T-cell (primary cell): ENCODE measurements at regions of chr19 and their contacts with region 1.

Region 1: GRCh38 chr19:40542202-40542859 is 34.3 kb upstream of the SHKBP1 start:
- DNase-seq: no peak
- ATAC-seq: no peak
- H3K4me3 ChIP-seq: no peak overlapping the region
- H3K4me3 Mint-ChIP-seq: no peak overlapping the region
- H3K27ac ChIP-seq: no peak overlapping the region
- H3K27ac Mint-ChIP-seq: no peak overlapping the region
- H3K4me1 ChIP-seq: no peaks in the 10 kb centered on the region
- H3K4me1 Mint-ChIP-seq: no peaks in the 10 kb centered on the region
- H3K27me3 ChIP-seq: peaks cover 4 to 8% of the 10 kb centered on the region in 2 experiments
- H3K27me3 Mint-ChIP-seq: peaks cover 7 to 10% of the 10 kb centered on the region in 2 donors

Region 2: DNA sequence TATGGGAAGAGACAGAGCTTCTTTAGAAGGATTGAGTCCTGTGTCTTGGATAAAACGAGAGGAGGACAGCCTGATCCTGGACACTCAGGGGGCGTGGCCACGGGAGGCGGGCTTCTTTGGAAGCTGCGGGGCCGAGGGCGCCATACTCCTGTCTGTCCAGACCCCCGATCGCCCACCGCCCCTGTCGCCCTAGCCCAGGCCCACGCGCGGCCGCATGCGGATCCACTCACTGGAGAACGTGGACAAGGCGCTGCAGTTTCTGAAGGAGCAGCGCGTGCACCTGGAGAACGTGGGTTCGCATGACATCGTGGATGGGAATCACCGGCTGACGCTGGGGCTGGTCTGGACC is 52.5 kb before region 1 on chr19:
- CTCF ChIA-PET with region 1: interaction called, 5 to 10 read pairs
- POLR2A ChIA-PET with region 1: no interaction called
- DNase-seq: no peak
- ATAC-seq: no peak
- H3K4me3 ChIP-seq: no peak overlapping the region
- H3K4me3 Mint-ChIP-seq: no peak overlapping the region
- H3K27ac ChIP-seq: no peak overlapping the region
- H3K27ac Mint-ChIP-seq: no peak overlapping the region
- H3K4me1 ChIP-seq: peaks cover 0 to 6% of the 10 kb centered on the region in 2 experiments
- H3K4me1 Mint-ChIP-seq: peaks cover 2 to 6% (median 3%) of the 10 kb centered on the region in 3 donors
- H3K27me3 ChIP-seq: peaks cover 0 to 51% of the 10 kb centered on the region in 2 experiments
- H3K27me3 Mint-ChIP-seq: peaks cover 27 to 34% of the 10 kb centered on the region in 2 donors

Region 3: DNA sequence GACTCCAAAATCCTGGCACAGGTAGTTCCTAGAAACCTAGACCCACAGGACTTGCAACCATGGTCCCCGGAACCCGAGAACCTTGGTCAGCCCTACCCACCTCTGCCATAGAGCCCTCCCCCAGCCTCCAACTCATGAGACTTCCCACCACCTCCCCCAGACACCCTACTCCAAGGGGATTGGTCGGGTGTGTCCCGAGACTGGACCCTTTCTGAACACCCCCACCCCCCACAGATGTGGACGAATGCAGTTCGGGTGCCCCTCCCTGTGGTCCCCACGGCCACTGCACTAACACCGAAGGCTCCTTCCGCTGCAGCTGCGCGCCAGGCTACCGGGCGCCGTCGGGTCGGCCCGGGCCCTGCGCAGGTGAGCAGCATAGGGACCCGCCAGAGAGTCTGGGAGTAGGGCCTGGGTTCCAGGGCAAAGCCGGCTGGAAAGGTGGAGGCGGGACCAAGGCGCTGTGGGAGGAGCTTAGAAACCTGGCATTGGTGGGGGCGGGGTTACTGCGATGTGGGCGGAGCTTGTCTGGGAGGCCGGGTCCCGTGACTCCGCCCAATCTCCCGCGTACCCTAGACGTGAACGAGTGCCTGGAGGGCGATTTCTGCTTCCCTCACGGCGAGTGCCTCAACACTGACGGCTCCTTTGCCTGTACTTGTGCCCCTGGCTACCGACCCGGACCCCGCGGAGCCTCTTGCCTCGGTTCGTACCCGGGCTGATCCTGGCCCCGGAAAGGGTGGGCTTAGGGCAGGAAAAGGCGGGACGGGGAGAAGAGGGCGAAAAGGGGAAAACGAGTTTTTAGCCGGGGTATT is 70.7 kb after region 1 on chr19:
- CTCF ChIA-PET with region 1: no interaction called
- POLR2A ChIA-PET with region 1: no interaction called
- DNase-seq: peak in 33 of 35 experiments; percentile 30 to 79 (median 56)
- ATAC-seq: peak in 1 of 4 experiments; percentile 6
- H3K4me3 ChIP-seq: peak overlapping the region; percentile 67 to 83
- H3K4me3 Mint-ChIP-seq: peak overlapping the region; percentile 85 to 93 (median 91)
- H3K27ac ChIP-seq: peak overlapping the region; percentile 70
- H3K27ac Mint-ChIP-seq: peak overlapping the region; percentile 93 to 95
- H3K4me1 ChIP-seq: peaks cover 13 to 72% of the 10 kb centered on the region in 2 experiments
- H3K4me1 Mint-ChIP-seq: peaks cover 49 to 70% (median 69%) of the 10 kb centered on the region in 3 donors
- H3K27me3 ChIP-seq: no peaks in the 10 kb centered on the region
- H3K27me3 Mint-ChIP-seq: no peaks in the 10 kb centered on the region